Activated B cell treated with CpG ODN at 0.5 μM for 24 hours (primary cell): ENCODE measurements at regions of chr9 and their contacts with region 1.

Region 1: DNA sequence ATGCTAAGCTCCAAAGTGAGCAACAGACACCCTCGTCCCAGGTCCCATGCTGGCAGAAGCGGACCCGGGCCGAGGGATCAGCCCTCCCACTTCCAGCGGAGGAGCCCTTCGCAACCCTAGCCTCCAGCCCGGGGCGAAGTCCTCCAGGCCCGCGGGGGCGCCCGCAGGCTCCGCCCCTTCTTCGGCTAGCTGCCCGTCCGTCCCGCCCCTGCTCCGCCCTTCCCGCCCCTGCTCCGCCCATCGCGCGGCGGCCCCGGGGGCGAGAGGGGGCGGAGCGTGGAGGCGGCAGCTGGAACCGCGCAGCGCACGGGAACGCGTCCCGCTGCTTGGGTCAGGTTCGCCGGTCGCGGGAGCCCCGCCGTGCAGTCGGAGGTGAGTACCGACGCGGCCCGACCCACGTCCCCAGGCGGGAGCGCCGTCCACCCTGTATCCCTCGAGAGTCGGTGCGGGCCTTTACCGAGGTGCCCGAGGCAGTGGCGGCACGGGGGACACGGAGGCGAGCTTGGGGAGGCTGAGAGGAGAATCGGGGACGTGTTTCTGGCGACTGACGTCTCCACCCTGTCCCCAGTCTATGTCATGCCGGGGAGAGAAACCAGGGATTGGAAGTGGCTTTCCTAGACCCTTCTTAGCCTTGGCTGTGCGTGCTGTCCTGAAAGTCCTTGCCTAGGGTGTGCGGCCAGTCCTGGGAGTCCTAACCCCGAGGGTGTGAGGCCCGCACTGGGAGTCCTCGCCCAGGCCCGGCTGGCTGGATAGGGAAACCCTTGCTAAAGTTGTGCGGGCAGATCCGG is at the start of gene ACO1:
- DNase-seq: peak; percentile 92
- ATAC-seq: peak; percentile 98
- H3K4me3 Mint-ChIP-seq: peak within 1 kb of the TSS; percentile 86
- H3K27ac Mint-ChIP-seq: peak within 1 kb of the TSS; percentile 46
- H3K4me1 Mint-ChIP-seq: peaks cover 11% of the 10 kb centered on the region
- H3K27me3 Mint-ChIP-seq: peaks cover 21% of the 10 kb centered on the region
- CTCF ChIP-seq: no peak
- total RNA-seq, gene ACO1: 10.3 and 10.4 TPM in 2 replicates

Region 2: DNA sequence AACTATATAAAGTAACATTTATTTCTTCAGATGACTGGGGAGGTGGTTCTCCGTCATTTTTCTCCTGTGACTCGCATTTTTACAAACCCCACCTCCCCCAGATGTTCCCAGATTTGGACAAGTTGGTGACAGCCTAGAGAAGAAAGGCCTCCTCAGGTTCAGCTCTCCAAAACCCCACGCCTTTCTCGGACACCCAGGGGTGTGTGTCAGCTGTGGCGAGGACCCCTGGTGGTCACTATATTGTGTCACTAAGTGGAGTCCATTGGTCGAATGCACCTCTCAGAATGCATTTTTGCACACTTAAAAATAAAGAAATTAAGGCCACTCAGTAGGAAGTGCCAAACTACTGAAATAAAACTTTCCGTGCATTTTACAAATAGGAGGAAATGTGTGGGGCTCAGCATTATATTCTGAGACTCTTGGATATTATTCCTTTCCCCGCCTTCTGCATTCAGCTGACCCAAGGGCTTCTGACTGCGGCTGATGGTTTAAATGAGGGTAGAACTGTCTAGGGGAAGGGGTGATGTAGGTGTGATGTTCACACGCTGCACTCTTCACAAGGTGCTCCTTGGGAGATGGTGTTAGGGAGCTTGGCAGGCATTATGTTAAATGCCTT is 47.5 kb after region 1 on chr9:
- CTCF ChIA-PET with region 1: interaction called, 83 read pairs
- POLR2A ChIA-PET with region 1: interaction called, 4 read pairs
- intact Hi-C with region 1: loop called (anchors 1 kb)
- DNase-seq: no peak
- ATAC-seq: peak; percentile 52
- H3K4me3 Mint-ChIP-seq: no peak overlapping the region
- H3K27ac Mint-ChIP-seq: no peak overlapping the region
- H3K4me1 Mint-ChIP-seq: no peaks in the 10 kb centered on the region
- H3K27me3 Mint-ChIP-seq: no peaks in the 10 kb centered on the region
- CTCF ChIP-seq: no peak

Region 3: DNA sequence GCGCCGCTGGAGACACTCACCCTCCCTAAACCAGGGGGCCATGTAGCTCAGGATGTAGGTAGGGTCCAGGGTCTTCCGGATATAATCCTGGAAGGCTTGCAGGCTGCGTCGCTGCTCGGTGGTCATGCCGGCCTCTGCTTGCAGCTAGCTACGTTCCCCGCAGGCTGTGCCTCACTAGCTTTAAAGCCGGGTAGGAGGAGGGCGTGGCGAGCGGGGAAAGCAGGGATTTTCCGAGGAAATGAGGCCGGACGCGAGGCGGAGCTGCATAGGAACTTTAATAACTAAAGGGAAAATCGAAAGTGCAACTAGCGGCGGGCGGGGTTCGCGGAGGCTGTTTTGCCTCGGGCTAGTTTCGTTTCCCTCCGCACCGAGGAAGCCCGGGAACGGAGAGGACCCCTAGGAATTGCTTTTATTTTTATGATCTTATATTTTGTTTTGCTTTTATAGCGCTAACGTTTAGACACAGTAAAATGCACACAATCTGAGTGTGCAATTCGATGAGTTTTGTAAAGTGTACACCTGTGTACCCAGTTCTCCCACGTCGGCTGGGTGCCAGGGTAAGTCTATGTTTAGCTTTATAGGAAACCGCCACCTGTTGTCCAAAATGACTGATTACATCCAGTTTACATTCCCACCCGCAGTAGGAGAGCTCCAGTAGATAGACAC is 141.6 kb after region 1 on chr9 and contains the start of gene RIGI:
- CTCF ChIA-PET with region 1: interaction called, 34 read pairs
- POLR2A ChIA-PET with region 1: interaction called, 4 read pairs
- intact Hi-C with region 1: loop called (anchors 1 kb)
- DNase-seq: peak; percentile 59
- ATAC-seq: peak; percentile 69
- H3K4me3 Mint-ChIP-seq: peak within 1 kb of the TSS; percentile 98
- H3K27ac Mint-ChIP-seq: peak within 1 kb of the TSS; percentile 94
- H3K4me1 Mint-ChIP-seq: peaks cover 55% of the 10 kb centered on the region
- H3K27me3 Mint-ChIP-seq: no peaks in the 10 kb centered on the region
- CTCF ChIP-seq: no peak
- total RNA-seq, gene RIGI: 11.3 and 12.3 TPM in 2 replicates

Region 4: GRCh38 chr9:32550562-32551433 is 166.2 kb after region 1 on chr9:
- CTCF ChIA-PET with region 1: interaction called, 18 read pairs
- POLR2A ChIA-PET with region 1: interaction called, 19 read pairs
- intact Hi-C with region 1: loop called (anchors 1 kb)
- DNase-seq: peak; percentile 91
- ATAC-seq: peak; percentile 80
- H3K4me3 Mint-ChIP-seq: peak overlapping the region; percentile 95
- H3K27ac Mint-ChIP-seq: peak overlapping the region; percentile 98
- H3K4me1 Mint-ChIP-seq: peaks cover 34% of the 10 kb centered on the region
- H3K27me3 Mint-ChIP-seq: no peaks in the 10 kb centered on the region
- CTCF ChIP-seq: no peak

Region 5: GRCh38 chr9:32579706-32580331 is 195.3 kb after region 1 on chr9:
- CTCF ChIA-PET with region 1: interaction called, 440 read pairs
- POLR2A ChIA-PET with region 1: interaction called, 3 read pairs
- intact Hi-C with region 1: loop called (anchors 1 kb)
- DNase-seq: peak; percentile 59
- ATAC-seq: peak; percentile 64
- H3K4me3 Mint-ChIP-seq: no peak overlapping the region
- H3K27ac Mint-ChIP-seq: no peak overlapping the region
- H3K4me1 Mint-ChIP-seq: no peaks in the 10 kb centered on the region
- H3K27me3 Mint-ChIP-seq: peaks cover 20% of the 10 kb centered on the region
- CTCF ChIP-seq: peak; percentile 97